ENCODE measurements at regions of chr18 and their contacts with region 1.

Region 1: DNA sequence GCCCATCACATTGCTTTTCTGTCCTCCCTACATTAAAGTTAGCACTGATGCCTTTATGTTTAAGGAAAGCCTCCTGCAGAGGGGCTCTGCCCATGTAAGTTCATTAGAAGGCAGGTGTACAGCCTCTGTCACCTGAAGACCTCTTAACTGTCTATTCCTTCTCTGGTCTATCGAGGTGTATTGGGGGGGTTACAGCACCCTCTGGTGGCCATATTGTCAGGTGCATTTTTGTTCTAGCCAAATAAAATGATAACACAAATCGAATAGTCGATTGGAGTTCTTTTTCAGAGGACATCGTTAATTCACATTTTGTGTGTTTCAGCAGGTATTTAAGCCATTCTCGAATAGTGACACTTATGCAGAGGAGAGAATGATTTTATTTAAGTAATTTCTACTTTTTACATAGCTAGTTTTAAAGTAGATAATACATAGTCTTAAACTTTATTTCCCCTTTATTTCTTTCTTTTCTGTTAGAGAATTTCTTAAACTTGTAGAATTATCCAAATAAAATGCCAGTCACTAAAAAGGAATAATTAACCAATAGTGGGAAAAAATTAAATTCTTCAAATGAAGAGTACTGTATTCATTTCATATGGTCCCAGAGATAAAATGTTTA is 136.8 kb downstream of the NEDD4L start:
- DNase-seq: peak in 1 of 2 donors; percentile 25
- ATAC-seq: no peak
- H3K4me3 ChIP-seq: no peak overlapping the region
- H3K27ac ChIP-seq: no peak overlapping the region
- H3K4me1 ChIP-seq: peaks cover 0 to 7% (median 0%) of the 10 kb centered on the region in 9 donors
- H3K27me3 ChIP-seq: no peaks in the 10 kb centered on the region
- CTCF ChIP-seq: peak; percentile 74 to 94 (median 88)

Region 2: DNA sequence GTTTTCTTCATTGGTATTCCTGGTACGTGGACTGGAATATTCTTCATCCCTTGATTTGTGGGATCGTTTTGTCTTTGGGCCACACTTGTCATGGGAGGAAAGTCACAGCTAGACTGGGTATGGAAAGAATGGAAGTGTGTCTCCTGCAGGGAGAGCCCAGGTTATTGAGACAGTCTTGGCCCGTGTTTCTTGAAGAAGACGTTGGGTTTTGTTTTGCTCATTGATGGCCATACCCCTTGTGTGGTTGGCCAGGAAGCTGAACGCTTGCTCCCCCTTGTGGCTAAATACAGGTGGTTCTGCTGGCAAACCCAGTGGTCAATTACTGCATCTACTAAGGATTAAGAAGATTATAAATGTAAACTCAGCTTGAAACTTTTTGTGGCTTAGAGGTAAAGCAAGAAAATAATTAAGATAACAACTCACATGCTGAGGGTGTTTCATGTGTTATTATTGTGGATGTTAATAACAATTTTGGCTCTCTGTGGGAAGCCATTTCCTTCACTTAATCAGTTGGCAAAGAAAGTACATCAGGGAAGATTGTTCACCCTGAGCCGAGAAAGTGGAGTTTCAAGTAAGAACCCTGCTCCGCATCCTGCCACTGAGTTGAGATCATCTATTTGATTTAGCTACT is 45.0 kb before region 1 on chr18:
- intact Hi-C with region 1: loop called in 1 of 10 experiments (anchors 5 kb)
- DNase-seq: peak in 1 of 2 donors; percentile 42
- ATAC-seq: peak; percentile 47 to 83 (median 64)
- H3K4me3 ChIP-seq: no peak overlapping the region
- H3K27ac ChIP-seq: no peak overlapping the region
- H3K4me1 ChIP-seq: peaks cover 0 to 8% (median 0%) of the 10 kb centered on the region in 9 donors
- H3K27me3 ChIP-seq: no peaks in the 10 kb centered on the region
- CTCF ChIP-seq: peak; percentile 57 to 87 (median 78)

Region 3: DNA sequence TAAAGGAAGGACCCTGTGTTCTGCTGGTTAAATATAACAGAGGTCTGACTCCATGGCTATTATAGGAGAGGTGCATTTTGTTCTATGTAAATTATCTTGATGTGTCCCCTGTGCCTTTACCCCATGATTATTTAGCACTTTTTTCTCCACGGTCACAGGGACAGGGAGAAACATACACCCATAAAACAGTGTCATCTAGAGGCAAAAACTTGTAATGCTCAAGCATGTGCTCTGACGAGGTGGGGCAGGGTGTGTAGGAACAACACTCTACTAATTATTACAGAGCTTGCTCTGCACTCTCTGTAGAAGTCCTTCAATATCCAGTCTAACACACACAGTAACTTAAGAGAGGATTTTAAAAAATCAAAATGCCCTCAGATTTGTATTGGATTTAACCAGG is 51.1 kb after region 1 on chr18:
- intact Hi-C with region 1: loop called in 1 of 10 experiments (anchors 10 kb)
- DNase-seq: no peak
- ATAC-seq: peak in 7 of 8 donors; percentile 67 to 87 (median 74)
- H3K4me3 ChIP-seq: no peak overlapping the region
- H3K27ac ChIP-seq: no peak overlapping the region
- H3K4me1 ChIP-seq: no peaks in the 10 kb centered on the region
- H3K27me3 ChIP-seq: no peaks in the 10 kb centered on the region
- CTCF ChIP-seq: peak in 7 of 9 donors; percentile 30 to 61 (median 54)

Region 4: GRCh38 chr18:58303363-58303762 is 122.5 kb after region 1 on chr18:
- intact Hi-C with region 1: loop called in 1 of 10 experiments (anchors 10 kb)
- DNase-seq: no peak
- ATAC-seq: no peak
- H3K4me3 ChIP-seq: no peak overlapping the region
- H3K27ac ChIP-seq: no peak overlapping the region
- H3K4me1 ChIP-seq: peaks cover 0 to 74% (median 33%) of the 10 kb centered on the region in 9 donors
- H3K27me3 ChIP-seq: no peaks in the 10 kb centered on the region
- CTCF ChIP-seq: no peak

Measured in heart right ventricle (tissue), 16 donors.